Cardiac septum (tissue), 1 donor: ENCODE measurements at regions of chr6 and their contacts with region 1.

Region 1: DNA sequence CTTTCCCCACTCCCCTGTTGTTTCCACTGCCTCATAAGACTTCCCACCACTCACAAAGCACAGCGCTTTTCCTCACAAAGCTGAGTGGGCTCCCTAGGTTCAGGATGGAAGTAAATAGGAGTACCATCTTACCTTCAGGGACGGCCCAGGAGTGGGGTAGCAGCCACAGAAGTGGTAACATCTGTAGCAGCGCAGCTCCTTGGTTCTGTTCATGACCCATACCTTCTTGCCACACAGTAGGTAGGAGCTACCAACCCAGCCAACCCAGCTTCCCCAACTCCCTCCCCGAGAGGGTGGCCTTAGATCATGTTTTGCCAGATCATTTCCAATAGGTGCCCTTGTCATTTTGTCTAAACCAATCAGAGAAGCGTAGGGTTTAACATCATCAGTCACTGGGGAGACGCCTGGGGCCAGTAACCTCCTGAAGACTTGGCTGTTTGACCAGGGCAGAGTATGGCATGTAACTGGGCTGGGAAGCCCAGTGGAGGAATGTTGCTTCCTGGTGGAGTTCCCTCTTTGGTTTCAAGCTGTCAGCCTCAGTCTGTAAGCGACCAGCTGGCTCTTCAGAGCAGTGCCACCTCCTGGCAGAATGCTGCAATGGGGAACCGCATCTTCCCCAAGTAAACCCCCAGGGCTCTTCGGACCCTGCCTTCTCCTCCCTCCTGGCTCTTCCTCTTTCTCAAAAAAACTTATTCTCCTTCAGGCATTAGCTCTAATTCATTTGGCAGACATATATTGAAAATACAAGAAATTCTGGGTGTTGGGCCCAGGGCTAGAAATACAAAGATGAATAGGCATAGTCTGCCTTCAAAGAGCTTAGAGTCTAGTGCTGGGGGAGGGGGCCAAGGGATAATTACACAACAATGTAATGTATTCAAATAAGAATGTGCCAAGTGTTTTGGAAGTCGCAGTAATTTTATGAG is at the start of gene HLA-DMA:
- DNase-seq: peak; percentile 91
- total RNA-seq, gene HLA-DMA: 13.7 TPM

Region 2: DNA sequence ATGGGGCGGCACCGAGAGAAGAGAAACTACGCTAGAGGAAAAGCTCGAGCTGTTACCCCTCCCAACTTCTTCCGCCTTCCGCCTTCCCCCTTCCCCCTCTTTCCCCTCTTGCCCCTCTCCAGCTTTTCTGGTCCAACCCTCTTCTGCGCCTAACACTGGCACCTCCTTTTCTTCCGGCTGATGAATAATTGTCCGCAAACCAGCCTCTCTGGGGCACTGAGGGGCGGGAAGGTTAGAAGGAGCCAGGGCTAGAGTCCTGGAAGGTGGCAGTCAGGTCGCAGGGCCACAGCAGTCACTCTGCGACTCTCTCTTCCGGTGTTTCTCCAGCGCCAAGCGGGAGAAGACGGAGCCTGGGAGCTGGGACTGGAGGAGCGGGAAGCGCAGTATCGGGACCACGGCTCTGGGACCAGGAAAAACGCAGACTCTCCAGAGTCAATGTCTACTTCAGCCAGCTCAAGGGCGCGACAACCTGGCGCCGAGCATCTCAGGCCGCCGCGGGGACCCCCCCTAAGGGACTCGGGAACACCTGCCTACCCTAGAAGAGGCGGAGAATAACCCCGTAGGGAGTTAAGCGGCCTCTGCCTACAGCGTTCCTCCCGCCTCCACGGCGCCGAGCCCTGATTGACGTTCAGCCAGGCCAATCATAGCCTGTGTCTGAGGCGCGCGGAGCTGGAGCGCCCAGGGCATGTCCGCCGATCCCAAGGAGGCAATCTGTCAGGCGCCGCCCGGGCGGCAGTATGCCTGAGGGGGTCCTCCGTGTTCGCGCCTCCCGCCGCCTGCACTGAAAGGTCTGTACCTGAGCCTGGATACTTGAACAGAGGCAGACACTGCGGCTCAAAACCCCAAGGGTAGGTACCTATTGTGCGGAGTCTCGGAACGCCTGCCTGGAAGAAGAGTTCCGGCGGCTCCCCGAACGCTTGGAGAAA is 58.7 kb before region 1 on chr6:
- intact Hi-C with region 1: loop called (anchors 2 kb)
- DNase-seq: peak; percentile 99